Aorta (tissue), 5 donors: ENCODE measurements at regions of chr5 and their contacts with region 1.

Region 1: DNA sequence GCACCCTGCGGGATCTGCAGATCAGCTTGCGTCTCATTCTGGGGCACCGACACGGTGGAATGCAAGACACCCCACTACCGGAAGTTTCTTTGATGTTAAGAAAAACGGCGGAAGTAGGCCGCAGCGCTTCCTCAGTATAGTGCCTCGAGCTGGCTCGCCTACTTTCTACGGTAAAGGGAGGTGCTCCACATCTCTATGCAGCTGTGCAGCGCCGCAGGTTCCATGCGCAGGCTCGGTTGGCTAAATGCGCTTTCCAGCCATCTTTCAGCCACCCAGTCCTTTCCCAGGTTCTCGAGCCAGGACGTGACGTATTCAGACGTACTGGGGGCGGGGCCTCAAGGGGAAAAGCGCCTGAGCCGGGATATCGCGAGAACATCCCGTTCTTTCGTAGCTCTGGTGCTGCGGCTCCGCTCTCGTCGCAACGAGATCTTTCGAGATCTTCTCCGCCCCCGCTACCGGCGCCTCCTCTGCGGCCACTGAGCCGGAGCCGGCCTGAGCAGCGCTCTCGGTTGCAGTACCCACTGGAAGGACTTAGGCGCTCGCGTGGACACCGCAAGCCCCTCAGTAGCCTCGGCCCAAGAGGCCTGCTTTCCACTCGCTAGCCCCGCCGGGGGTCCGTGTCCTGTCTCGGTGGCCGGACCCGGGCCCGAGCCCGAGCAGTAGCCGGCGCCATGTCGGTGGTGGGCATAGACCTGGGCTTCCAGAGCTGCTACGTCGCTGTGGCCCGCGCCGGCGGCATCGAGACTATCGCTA is at the start of gene HSPA4:
- DNase-seq: peak; percentile 98 to 99
- ATAC-seq: peak; percentile 98
- H3K4me3 ChIP-seq: peak within 1 kb of the TSS; percentile 20 to 95
- H3K27ac ChIP-seq: peak within 1 kb of the TSS; percentile 91 to 98
- H3K4me1 ChIP-seq: peaks cover 0 to 5% of the 10 kb centered on the region in 2 donors
- H3K27me3 ChIP-seq: no peaks in the 10 kb centered on the region
- total RNA-seq, gene HSPA4: 56.1 to 135 TPM

Region 2: GRCh38 chr5:132963175-132964104 is 88.3 kb before region 1 on chr5 and contains the start of gene AFF4:
- intact Hi-C with region 1: loop called in 1 of 2 experiments (anchors 2 kb)
- DNase-seq: peak; percentile 99
- ATAC-seq: peak; percentile 99
- H3K4me3 ChIP-seq: peak within 1 kb of the TSS; percentile 94 to 98
- H3K27ac ChIP-seq: peak within 1 kb of the TSS; percentile 100
- H3K4me1 ChIP-seq: peaks cover 3 to 7% of the 10 kb centered on the region in 2 donors
- H3K27me3 ChIP-seq: no peaks in the 10 kb centered on the region
- total RNA-seq, gene AFF4: 100 to 131 TPM